IMR-90 (cell line): ENCODE measurements at regions of chr16 and their contacts with region 1.

Region 1: GRCh38 chr16:48745541-48745940 is 135.6 kb upstream of the N4BP1 start:
- DNase-seq: no peak
- ATAC-seq: no peak
- H3K4me3 ChIP-seq: no peak overlapping the region
- H3K27ac ChIP-seq: no peak overlapping the region
- H3K4me1 ChIP-seq: no peaks in the 10 kb centered on the region
- H3K27me3 ChIP-seq: no peaks in the 10 kb centered on the region
- CTCF ChIP-seq: no peak
- POLR2A ChIP-seq: no peak
- RAD21 ChIP-seq: no peak

Region 2: DNA sequence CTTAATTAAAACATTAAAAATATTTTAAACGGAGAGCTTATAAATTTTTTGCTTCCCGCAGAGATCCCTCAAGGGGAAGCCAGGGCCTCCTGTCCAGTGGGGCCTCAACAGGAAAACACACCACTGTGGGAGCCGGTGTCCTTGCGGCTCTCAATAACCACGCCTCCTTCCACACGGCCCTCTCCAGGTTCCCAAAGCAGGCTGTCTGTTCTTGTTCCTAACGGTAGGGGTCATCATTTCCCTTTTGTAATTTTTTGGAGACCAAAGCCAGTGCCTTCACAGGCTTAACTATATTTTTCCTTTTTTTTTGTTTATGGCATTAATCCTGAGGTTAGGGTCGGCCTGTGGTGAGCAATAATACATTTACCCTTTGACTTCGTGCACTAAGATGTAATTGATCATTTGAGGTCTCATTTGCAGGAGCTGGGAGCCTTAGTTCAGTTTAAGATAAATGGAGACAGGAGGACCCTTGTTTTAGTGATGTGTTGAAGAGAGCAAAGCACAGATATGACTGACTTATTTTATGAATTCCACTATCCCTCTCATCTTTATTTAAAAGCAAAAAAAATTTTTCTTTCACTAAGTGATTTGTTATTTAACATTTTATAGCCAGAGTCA is 58.0 kb before region 1 on chr16:
- CTCF ChIA-PET with region 1: no interaction called
- POLR2A ChIA-PET with region 1: no interaction called
- dilution Hi-C with region 1: no loop called
- in situ Hi-C with region 1: no loop called
- intact Hi-C with region 1: no loop called
- DNase-seq: peak; percentile 67
- ATAC-seq: peak; percentile 100
- H3K4me3 ChIP-seq: no peak overlapping the region
- H3K27ac ChIP-seq: no peak overlapping the region
- H3K4me1 ChIP-seq: no peaks in the 10 kb centered on the region
- H3K27me3 ChIP-seq: no peaks in the 10 kb centered on the region; the same call in 1 of the 2 replicates
- CTCF ChIP-seq: peak; percentile 84
- POLR2A ChIP-seq: no peak
- RAD21 ChIP-seq: peak; percentile 81

Region 3: GRCh38 chr16:48704710-48705109 is 40.8 kb before region 1 on chr16:
- CTCF ChIA-PET with region 1: no interaction called
- POLR2A ChIA-PET with region 1: no interaction called
- dilution Hi-C with region 1: no loop called
- in situ Hi-C with region 1: no loop called
- intact Hi-C with region 1: no loop called
- DNase-seq: no peak
- ATAC-seq: no peak
- H3K4me3 ChIP-seq: no peak overlapping the region
- H3K27ac ChIP-seq: no peak overlapping the region
- H3K4me1 ChIP-seq: no peaks in the 10 kb centered on the region
- H3K27me3 ChIP-seq: no peaks in the 10 kb centered on the region
- CTCF ChIP-seq: no peak
- POLR2A ChIP-seq: no peak
- RAD21 ChIP-seq: no peak

Region 4: GRCh38 chr16:48788475-48788874 is 42.9 kb after region 1 on chr16:
- CTCF ChIA-PET with region 1: no interaction called
- POLR2A ChIA-PET with region 1: no interaction called
- dilution Hi-C with region 1: no loop called
- in situ Hi-C with region 1: no loop called
- intact Hi-C with region 1: loop called (anchors 5 kb)
- DNase-seq: no peak
- ATAC-seq: no peak
- H3K4me3 ChIP-seq: no peak overlapping the region
- H3K27ac ChIP-seq: no peak overlapping the region
- H3K4me1 ChIP-seq: no peaks in the 10 kb centered on the region
- H3K27me3 ChIP-seq: no peaks in the 10 kb centered on the region
- CTCF ChIP-seq: no peak
- POLR2A ChIP-seq: no peak
- RAD21 ChIP-seq: no peak